AG04450 (cell line): ENCODE measurements at regions of chr11 and their contacts with region 1.

Region 1: GRCh38 chr11:115504276-115505158 is at the start of gene CADM1:
- DNase-seq: peak; percentile 87
- H3K4me3 ChIP-seq: peak within 1 kb of the TSS; percentile 91
- H3K27ac ChIP-seq: peak within 1 kb of the TSS; percentile 31
- H3K27me3 ChIP-seq: peaks cover 20% of the 10 kb centered on the region
- CTCF ChIP-seq: peak; percentile 84
- polyA plus RNA-seq, gene CADM1: 70.7 and 77.8 TPM in 2 replicates

Region 2: DNA sequence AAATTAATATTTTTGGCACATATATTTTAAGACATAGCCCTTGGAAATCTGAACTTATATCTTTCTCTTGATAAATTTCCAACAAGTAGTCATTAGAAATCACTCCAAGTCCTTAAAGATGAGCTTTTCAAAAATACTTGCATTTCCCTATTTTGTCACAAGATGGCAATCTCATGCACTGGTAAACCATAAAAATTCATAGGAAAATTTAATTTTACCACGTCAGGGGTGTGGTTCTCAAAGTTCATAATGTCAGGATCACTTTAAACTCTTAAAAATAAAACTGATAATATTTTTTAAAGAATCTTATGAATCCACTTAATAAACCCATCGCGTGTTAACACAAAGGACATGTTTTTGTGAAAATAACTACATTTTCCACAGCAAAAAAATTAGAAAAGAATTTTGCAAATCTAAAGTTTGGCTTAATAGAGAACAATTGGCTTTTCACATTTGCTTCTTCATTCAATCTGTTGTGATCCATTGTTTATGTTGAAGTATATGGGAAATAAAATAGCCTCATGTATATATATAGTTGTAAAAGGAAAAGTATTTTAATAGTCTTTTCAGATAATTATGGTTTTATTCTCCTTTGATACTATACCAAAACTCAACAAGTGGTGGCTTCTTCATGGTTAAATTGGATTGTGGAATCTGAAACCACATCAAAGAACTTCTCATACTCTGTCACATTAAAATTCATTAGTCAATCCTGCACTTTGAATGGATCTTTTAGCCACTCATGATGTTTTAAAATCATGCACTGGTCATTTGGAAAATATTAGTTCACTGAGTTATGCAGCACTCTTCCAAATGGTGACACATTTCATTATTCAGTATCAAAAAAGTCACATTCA is 169.4 kb before region 1 on chr11:
- CTCF ChIA-PET with region 1: interaction called, 28 read pairs
- POLR2A ChIA-PET with region 1: interaction called, 7 read pairs
- DNase-seq: no peak
- H3K4me3 ChIP-seq: no peak overlapping the region
- H3K27ac ChIP-seq: no peak overlapping the region
- H3K27me3 ChIP-seq: no peaks in the 10 kb centered on the region
- CTCF ChIP-seq: peak; percentile 80

Region 3: DNA sequence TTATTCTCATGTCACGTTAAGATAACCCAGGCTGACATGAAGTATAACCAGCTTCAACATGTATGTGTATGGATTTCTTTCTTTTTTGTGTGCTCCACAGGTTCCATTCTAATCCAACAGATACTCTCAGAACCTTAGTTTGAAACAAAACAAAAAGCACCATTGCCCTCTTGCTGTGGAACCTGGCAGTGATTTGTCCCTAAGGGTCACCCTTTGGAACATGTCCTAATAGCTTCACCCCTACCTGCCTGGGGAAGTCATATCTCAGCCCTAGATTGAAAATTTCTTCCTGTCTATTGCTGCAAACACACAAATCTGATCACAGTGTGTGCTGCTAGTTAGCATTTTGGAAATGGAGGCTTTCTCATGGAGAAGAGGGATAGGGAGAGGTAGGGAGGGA is 11.1 kb after region 1 on chr11:
- CTCF ChIA-PET with region 1: interaction called, 13 read pairs
- POLR2A ChIA-PET with region 1: no interaction called
- DNase-seq: no peak
- H3K4me3 ChIP-seq: no peak overlapping the region
- H3K27ac ChIP-seq: no peak overlapping the region
- H3K27me3 ChIP-seq: peaks cover 17% of the 10 kb centered on the region
- CTCF ChIP-seq: no peak

Region 4: DNA sequence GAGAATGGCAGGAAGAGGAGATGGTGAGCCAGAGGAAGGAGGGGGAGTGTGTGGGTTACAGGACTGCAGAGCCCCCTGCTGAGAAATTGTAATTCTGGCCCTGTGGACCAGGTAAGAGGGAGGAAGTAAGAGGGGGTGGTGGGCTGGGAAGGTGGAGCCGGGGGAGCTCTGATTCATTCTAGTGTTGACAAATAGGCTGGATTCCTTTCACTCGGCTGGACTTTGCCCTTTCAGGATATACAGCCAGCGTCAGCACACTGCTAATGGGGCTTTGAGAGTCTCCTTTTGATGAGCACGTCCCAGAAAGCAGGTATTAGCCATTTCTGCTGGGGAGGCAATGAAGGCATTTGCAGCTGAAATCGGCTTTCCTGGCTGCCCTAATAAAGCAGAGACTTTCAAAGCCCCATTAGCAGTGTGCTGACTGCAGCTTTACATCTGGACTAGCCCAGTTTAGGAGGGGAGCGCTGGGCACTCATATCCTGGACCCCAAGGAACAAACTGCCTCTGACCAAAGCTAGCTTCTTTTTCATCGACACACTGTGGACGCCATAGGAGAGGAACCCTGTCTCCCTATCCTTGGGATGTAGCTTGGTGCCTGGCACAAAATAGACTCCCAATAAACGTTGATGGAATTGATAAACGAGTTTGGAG is 44.5 kb after region 1 on chr11:
- CTCF ChIA-PET with region 1: no interaction called
- POLR2A ChIA-PET with region 1: no interaction called
- DNase-seq: no peak
- H3K4me3 ChIP-seq: no peak overlapping the region
- H3K27ac ChIP-seq: no peak overlapping the region
- H3K27me3 ChIP-seq: peaks cover 21% of the 10 kb centered on the region
- CTCF ChIP-seq: no peak